Head of caudate nucleus (tissue), 42 donors: ENCODE measurements at regions of chr3 and their contacts with region 1.

Region 1: GRCh38 chr3:128322066-128323022 is 144.3 kb downstream of the DNAJB8 start:
- DNase-seq: peak in 41 of 42 donors; percentile 23 to 81 (median 52)

Region 2: DNA sequence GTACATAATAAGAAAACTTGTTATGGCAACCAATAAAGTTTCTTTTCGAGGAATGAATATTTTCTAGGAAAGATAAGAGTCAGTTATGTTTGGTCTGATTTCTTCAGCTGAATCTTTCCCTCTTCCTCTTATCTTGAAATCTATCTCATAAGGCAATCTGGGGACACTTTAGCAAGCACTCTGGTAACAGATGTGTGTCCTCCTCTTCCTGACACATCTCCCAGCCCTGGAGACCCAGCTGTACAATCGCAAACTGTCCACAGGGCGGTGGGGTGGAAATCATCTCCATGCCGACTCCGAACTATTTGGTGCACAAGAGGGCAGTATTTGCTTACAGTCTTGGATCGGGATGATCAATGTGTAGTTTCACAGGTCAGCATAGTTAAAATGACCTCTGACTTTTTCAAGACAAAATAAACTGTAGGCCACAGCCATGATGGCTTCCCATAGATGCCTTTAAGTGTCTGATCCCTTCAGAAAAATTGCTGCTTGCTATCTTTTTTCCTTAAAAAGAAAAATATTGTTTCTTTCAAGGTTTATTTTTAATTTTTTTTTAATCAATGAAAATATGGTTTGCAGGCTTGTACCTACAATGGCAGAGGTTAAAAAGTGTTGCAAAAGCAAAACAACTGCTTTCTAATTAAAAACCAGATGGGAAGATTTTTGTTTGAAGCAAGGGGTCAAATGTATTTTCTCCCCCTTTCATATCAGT is 151.4 kb before region 1 on chr3:
- intact Hi-C with region 1: loop called (anchors 10 kb)
- DNase-seq: peak; percentile 24 to 87 (median 69)

Region 3: DNA sequence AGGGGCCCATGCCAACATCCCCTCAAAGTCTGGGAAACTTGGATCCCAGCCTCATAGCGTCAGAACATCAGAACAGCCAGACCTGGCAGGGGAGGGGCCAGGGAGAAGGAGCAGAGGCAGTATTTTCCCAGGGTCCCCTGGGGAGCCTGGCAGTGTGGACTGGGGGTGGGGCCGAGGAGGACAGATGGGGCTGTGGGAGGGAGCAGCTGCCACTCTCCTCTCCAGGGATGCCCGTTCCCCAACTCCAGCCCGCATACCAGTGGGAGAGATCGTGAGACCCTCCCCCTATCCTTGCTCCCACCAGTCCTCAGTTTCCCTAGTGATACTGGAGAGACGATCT is 150.8 kb after region 1 on chr3:
- intact Hi-C with region 1: no loop called
- DNase-seq: no peak

Region 4: GRCh38 chr3:128532012-128532983 is 210.0 kb after region 1 on chr3:
- intact Hi-C with region 1: no loop called
- DNase-seq: peak in 1 of 42 donors; percentile 3

Region 5: DNA sequence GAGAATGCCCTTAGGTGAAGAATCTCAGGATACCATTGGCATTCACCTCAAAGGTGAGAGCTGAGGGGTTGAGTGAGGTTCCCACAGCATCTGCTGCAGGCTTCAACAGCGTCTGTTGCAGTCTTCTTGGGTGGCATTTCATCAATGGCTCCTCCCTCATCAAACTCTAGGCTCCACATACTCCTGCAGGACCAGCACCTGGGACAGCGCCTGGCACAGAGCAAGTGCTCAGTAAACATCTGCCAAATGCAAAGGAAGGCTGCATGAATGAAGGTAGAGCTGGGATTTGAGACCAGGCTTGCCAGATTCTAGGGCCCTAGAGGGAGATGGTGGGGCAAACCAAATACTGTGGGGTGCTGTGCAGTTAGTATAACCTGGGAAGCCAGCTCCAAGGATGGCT is 1661.8 kb after region 1 on chr3:
- intact Hi-C with region 1: no loop called
- DNase-seq: no peak